Body of pancreas (tissue), 4 donors: ENCODE measurements at regions of chr17 and their contacts with region 1.

Region 1: GRCh38 chr17:58364270-58364942 is 12.4 kb upstream of the SUPT4H1 start:
- DNase-seq: no peak
- ATAC-seq: no peak
- H3K4me3 ChIP-seq: no peak overlapping the region
- H3K27ac ChIP-seq: no peak overlapping the region
- H3K4me1 ChIP-seq: no peaks in the 10 kb centered on the region
- H3K27me3 ChIP-seq: no peaks in the 10 kb centered on the region
- CTCF ChIP-seq: no peak
- POLR2A ChIP-seq: no peak

Region 2: DNA sequence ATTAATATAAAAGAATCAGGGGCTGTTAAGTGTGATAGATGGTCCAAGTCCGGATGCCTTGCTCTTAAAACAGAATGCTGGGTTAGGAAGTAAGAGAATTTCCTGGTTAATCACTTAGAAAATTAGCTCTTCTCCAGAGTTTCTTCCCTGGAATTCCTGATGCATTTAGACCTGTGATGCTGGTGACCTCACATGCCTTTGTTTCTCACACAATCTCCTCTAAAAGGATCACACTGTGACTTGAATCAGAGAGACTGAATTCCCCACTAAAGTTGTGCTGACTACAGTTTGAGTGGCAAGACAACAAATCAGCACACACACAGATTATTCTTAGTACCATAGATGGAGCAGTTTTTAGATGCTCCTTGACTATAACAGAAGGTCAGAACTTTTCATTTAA is 57.3 kb after region 1 on chr17:
- intact Hi-C with region 1: loop called (anchors 5 kb)
- DNase-seq: no peak
- ATAC-seq: no peak
- H3K4me3 ChIP-seq: no peak overlapping the region
- H3K27ac ChIP-seq: no peak overlapping the region
- H3K4me1 ChIP-seq: peaks cover 7% of the 10 kb centered on the region
- H3K27me3 ChIP-seq: no peaks in the 10 kb centered on the region
- CTCF ChIP-seq: no peak
- POLR2A ChIP-seq: no peak

Region 3: GRCh38 chr17:59106463-59107305 is 742.3 kb after region 1 on chr17 and contains the start of gene TRIM37:
- intact Hi-C with region 1: no loop called
- DNase-seq: peak; percentile 98 to 99 (median 99)
- ATAC-seq: peak; percentile 99
- H3K4me3 ChIP-seq: peak within 1 kb of the TSS; percentile 54 to 82
- H3K27ac ChIP-seq: peak within 1 kb of the TSS; percentile 66 to 93 (median 86)
- H3K4me1 ChIP-seq: peaks cover 25% of the 10 kb centered on the region
- H3K27me3 ChIP-seq: no peaks in the 10 kb centered on the region
- CTCF ChIP-seq: peak in 2 of 7 experiments; percentile 27 to 37
- POLR2A ChIP-seq: peak; percentile 67 to 86 (median 85)
- total RNA-seq, gene TRIM37: 11.7 to 12.2 TPM